ENCODE measurements at regions of chr15 and their contacts with region 1.

Region 1: GRCh38 chr15:90071208-90071807 is 31.0 kb downstream of the IDH2 start:
- DNase-seq: peak; percentile 54
- ATAC-seq: peak; percentile 98
- H3K4me3 ChIP-seq: no peak overlapping the region
- H3K27ac ChIP-seq: no peak overlapping the region
- H3K4me1 ChIP-seq: no peaks in the 10 kb centered on the region
- H3K27me3 ChIP-seq: no peaks in the 10 kb centered on the region
- CTCF ChIP-seq: peak; percentile 79 to 89 (median 81)
- EP300 ChIP-seq: no peak
- POLR2A ChIP-seq: no peak
- RAD21 ChIP-seq: peak; percentile 95

Region 2: DNA sequence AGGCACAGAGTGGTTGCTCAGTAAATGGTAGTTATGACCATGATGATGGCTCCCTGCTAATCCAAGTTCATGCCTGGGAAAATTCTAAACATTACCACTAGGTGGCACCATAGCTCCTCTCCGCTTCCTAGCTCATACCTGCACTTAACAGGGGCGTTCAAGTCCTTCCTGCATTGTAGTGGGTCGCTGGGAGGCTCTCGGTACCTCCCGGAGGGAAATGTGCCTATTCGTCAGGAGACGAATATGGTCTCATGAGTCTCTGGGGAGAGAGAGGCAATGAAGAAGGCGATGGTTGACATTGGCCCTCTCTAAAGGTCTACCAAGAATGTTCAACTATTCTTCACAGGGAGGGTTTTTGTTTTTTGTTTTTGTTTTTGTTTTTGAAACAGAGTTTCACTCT is 331.2 kb before region 1 on chr15:
- CTCF ChIA-PET with region 1: interaction called, 7 read pairs
- POLR2A ChIA-PET with region 1: no interaction called
- RAD21 ChIA-PET with region 1: no interaction called
- SMC1A ChIA-PET with region 1: interaction called, 4 read pairs
- in situ Hi-C with region 1: no loop called
- intact Hi-C with region 1: loop called (anchors 5 kb)
- DNase-seq: peak; percentile 43
- ATAC-seq: peak; percentile 98
- H3K4me3 ChIP-seq: no peak overlapping the region
- H3K27ac ChIP-seq: no peak overlapping the region
- H3K4me1 ChIP-seq: no peaks in the 10 kb centered on the region
- H3K27me3 ChIP-seq: no peaks in the 10 kb centered on the region
- CTCF ChIP-seq: peak; percentile 86 to 91 (median 91); a peak in 5 of 6 replicates
- EP300 ChIP-seq: no peak
- POLR2A ChIP-seq: no peak
- RAD21 ChIP-seq: peak; percentile 82

Region 3: GRCh38 chr15:89888214-89888804 is 183.0 kb before region 1 on chr15:
- CTCF ChIA-PET with region 1: interaction called, 15 read pairs
- POLR2A ChIA-PET with region 1: no interaction called
- RAD21 ChIA-PET with region 1: interaction called, 11 read pairs
- SMC1A ChIA-PET with region 1: interaction called, 15 read pairs
- in situ Hi-C with region 1: no loop called
- intact Hi-C with region 1: no loop called
- DNase-seq: no peak
- ATAC-seq: peak; percentile 55; the same call in 2 of the 3 replicates
- H3K4me3 ChIP-seq: no peak overlapping the region
- H3K27ac ChIP-seq: no peak overlapping the region
- H3K4me1 ChIP-seq: peaks cover 14% of the 10 kb centered on the region
- H3K27me3 ChIP-seq: no peaks in the 10 kb centered on the region
- CTCF ChIP-seq: peak; percentile 32 to 38 (median 35); a peak in 3 of 6 replicates
- EP300 ChIP-seq: no peak
- POLR2A ChIP-seq: no peak
- RAD21 ChIP-seq: peak; percentile 46

Region 4: GRCh38 chr15:89893696-89894455 is 177.4 kb before region 1 on chr15 and contains the start of gene AP3S2:
- CTCF ChIA-PET with region 1: interaction called, 85 read pairs
- POLR2A ChIA-PET with region 1: interaction called, 3 read pairs
- RAD21 ChIA-PET with region 1: interaction called, 41 read pairs
- SMC1A ChIA-PET with region 1: interaction called, 32 read pairs
- in situ Hi-C with region 1: loop called (anchors 5 kb)
- intact Hi-C with region 1: loop called (anchors 1 kb)
- DNase-seq: peak; percentile 73
- ATAC-seq: peak; percentile 90
- H3K4me3 ChIP-seq: peak within 1 kb of the TSS; percentile 97
- H3K27ac ChIP-seq: peak within 1 kb of the TSS; percentile 87
- H3K4me1 ChIP-seq: peaks cover 23% of the 10 kb centered on the region
- H3K27me3 ChIP-seq: no peaks in the 10 kb centered on the region
- CTCF ChIP-seq: no peak
- EP300 ChIP-seq: peak in 1 of 2 experiments; percentile 31; a peak in 1 of 4 replicates
- POLR2A ChIP-seq: peak; percentile 92
- RAD21 ChIP-seq: no peak
- polyA plus RNA-seq, gene AP3S2: 10.0 to 13.1 TPM

Region 5: DNA sequence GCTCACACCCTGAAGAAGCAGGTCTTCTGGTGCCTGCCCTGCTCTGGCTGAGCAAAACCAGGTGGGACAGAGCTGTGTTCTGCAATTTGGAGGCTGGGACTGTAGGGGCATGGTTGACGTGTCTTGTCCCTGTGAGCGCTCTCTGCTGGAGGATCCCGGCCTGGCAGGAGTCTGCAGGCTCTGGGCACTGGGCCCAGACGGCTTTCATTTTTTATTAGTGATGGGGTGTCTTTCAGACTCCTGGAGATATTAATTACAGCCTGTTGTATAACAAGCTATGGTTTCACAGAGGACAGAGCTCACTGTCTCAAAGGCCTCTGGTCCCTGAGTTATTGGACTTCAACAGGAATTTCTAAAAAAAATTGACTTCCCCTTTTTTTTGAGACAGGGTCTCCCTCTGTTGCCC is 99.7 kb before region 1 on chr15:
- CTCF ChIA-PET with region 1: interaction called, 15 read pairs
- POLR2A ChIA-PET with region 1: no interaction called
- RAD21 ChIA-PET with region 1: interaction called, 3 read pairs
- SMC1A ChIA-PET with region 1: interaction called, 10 read pairs
- in situ Hi-C with region 1: no loop called
- intact Hi-C with region 1: no loop called
- DNase-seq: peak; percentile 11
- ATAC-seq: peak; percentile 100
- H3K4me3 ChIP-seq: no peak overlapping the region
- H3K27ac ChIP-seq: no peak overlapping the region
- H3K4me1 ChIP-seq: no peaks in the 10 kb centered on the region
- H3K27me3 ChIP-seq: no peaks in the 10 kb centered on the region
- CTCF ChIP-seq: peak; percentile 74 to 86 (median 86)
- EP300 ChIP-seq: no peak
- POLR2A ChIP-seq: no peak
- RAD21 ChIP-seq: peak; percentile 54

Region 6: GRCh38 chr15:90031231-90031791 is 40.0 kb before region 1 on chr15:
- CTCF ChIA-PET with region 1: interaction called, 7 read pairs
- POLR2A ChIA-PET with region 1: no interaction called
- RAD21 ChIA-PET with region 1: interaction called, 3 read pairs
- SMC1A ChIA-PET with region 1: interaction called, 19 read pairs
- in situ Hi-C with region 1: no loop called
- intact Hi-C with region 1: loop called (anchors 5 kb)
- DNase-seq: peak; percentile 95
- ATAC-seq: peak; percentile 92
- H3K4me3 ChIP-seq: peak overlapping the region; percentile 12; the same call in 1 of the 2 replicates
- H3K27ac ChIP-seq: peak overlapping the region; percentile 75
- H3K4me1 ChIP-seq: peaks cover 41% of the 10 kb centered on the region
- H3K27me3 ChIP-seq: no peaks in the 10 kb centered on the region
- CTCF ChIP-seq: no peak
- EP300 ChIP-seq: peak; percentile 60 to 83; a peak in 3 of 4 replicates
- POLR2A ChIP-seq: 0 out of 2 replicates have a peak, but pooled peaks have one; percentile 17
- RAD21 ChIP-seq: 0 out of 2 replicates have a peak, but pooled peaks have one; percentile 6

Region 7: GRCh38 chr15:90086868-90087268 is 15.6 kb after region 1 on chr15:
- CTCF ChIA-PET with region 1: interaction called, 13 read pairs
- POLR2A ChIA-PET with region 1: interaction called, 4 read pairs
- RAD21 ChIA-PET with region 1: interaction called, 4 read pairs
- SMC1A ChIA-PET with region 1: interaction called, 3 read pairs
- in situ Hi-C with region 1: no loop called
- intact Hi-C with region 1: no loop called
- DNase-seq: no peak
- ATAC-seq: peak; percentile 88
- H3K4me3 ChIP-seq: no peak overlapping the region
- H3K27ac ChIP-seq: no peak overlapping the region
- H3K4me1 ChIP-seq: no peaks in the 10 kb centered on the region
- H3K27me3 ChIP-seq: no peaks in the 10 kb centered on the region
- CTCF ChIP-seq: peak; percentile 79 to 87 (median 86)
- EP300 ChIP-seq: no peak
- POLR2A ChIP-seq: no peak
- RAD21 ChIP-seq: peak; percentile 79

Region 8: DNA sequence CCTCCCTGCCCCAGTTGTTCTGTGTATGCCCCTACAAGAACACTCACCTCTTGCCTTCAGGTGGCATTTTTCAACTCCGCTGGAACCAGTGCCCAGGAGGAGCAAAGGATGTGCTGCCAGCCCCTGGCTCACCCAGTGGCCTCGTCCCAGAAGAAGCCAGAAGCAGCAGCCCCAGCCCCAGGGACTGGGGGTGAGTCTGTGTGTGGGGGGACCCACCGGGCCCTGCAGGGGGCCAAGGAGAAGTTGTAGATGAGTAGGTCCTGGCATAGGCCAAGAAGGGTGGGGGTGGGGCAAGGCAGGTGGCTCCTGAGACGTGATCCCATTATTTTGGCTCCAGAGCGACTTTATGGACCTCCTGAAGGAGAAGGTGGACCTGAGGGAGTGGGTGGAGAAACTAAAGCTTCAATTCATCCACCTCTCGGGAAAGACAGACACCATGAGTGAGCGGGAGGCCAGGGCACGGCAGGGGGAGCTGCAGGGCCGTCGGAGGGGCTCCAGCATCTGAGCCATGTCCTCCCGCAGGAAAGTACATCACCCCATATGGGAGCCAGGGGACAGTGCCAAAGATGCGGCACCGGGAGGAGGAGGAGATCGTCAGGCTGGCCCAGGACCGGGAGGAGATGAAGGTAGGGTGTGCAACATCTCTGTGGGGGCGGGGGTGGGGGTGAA is 223.4 kb after region 1 on chr15:
- CTCF ChIA-PET with region 1: no interaction called
- POLR2A ChIA-PET with region 1: no interaction called
- RAD21 ChIA-PET with region 1: no interaction called
- SMC1A ChIA-PET with region 1: no interaction called
- in situ Hi-C with region 1: no loop called
- intact Hi-C with region 1: no loop called
- DNase-seq: no peak
- ATAC-seq: no peak
- H3K4me3 ChIP-seq: no peak overlapping the region
- H3K27ac ChIP-seq: no peak overlapping the region
- H3K4me1 ChIP-seq: no peaks in the 10 kb centered on the region
- H3K27me3 ChIP-seq: no peaks in the 10 kb centered on the region
- CTCF ChIP-seq: no peak
- EP300 ChIP-seq: no peak
- POLR2A ChIP-seq: no peak
- RAD21 ChIP-seq: no peak

Measured in GM12878 (cell line).